Motor neuron (in vitro differentiated cells): ENCODE measurements at regions of chr18 and their contacts with region 1.

Region 1: DNA sequence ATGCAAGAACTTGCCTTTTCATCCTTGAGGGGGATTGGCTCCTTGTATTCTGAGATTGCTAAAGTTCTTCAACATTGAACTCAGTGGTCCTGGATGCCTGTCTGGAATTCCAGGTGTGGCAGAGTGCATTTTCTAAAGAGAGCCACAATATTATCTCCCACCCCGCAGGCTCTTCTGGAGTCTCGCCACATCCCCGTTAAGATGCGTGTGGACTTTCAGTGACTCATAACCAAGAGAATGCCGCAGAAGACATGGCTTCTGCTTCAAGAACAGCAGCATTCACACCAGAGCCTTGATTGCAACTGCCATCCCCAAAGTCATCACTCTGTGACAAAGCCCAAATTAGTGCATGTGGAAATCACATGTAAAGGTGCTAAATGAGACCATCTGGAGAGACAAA is 142.7 kb downstream of the CDH20 start:
- ATAC-seq: no peak
- H3K4me3 ChIP-seq: no peak overlapping the region
- H3K27ac ChIP-seq: no peak overlapping the region
- H3K4me1 ChIP-seq: peaks cover 22 to 38% of the 10 kb centered on the region in 2 donors

Region 2: GRCh38 chr18:59988098-59988706 is 1487.7 kb before region 1 on chr18:
- in situ Hi-C with region 1: loop called in 1 of 9 experiments (anchors 25 kb)
- ATAC-seq: peak in 1 of 8 experiments; percentile 54
- H3K4me3 ChIP-seq: no peak overlapping the region
- H3K27ac ChIP-seq: no peak overlapping the region
- H3K4me1 ChIP-seq: no peaks in the 10 kb centered on the region

Region 3: GRCh38 chr18:60668583-60668982 is 807.3 kb before region 1 on chr18:
- in situ Hi-C with region 1: loop called in 1 of 9 experiments (anchors 25 kb)
- ATAC-seq: peak in 1 of 8 experiments; percentile 31
- H3K4me3 ChIP-seq: no peak overlapping the region
- H3K27ac ChIP-seq: no peak overlapping the region
- H3K4me1 ChIP-seq: no peaks in the 10 kb centered on the region

Region 4: DNA sequence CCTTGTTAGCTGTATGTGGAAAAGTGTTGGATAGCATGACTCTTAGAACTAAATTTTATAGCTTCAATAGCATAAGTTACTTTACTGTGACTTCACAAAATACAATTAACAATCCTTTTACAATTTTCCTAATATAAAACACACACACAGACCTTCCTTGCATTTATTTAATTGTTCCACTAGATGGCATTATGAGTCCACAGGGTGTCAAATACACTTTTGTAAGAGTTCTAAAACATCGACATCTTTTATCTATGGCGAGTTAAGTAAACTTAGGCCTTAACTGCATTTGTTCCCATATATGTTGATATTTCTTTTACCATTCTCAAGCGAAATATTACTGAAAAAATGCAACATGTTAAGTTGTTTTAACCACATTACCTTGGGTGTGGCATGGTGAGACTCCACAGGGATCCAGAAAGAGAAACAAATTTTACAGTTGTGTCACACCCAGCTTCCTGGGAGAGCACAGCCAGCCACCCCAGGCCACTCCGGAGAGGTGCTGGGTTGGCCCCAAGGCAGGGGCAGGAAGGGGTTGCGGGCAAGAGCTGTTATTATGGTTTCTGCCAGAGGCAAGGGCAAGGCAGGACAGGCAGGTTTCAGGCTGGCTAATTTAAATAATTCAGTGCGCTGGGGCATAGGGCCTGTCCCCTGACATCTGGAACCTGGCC is 791.0 kb before region 1 on chr18:
- in situ Hi-C with region 1: loop called in 7 of 9 experiments (anchors 25 kb)
- ATAC-seq: peak in 3 of 8 experiments; percentile 93 to 96 (median 96)
- H3K4me3 ChIP-seq: no peak overlapping the region
- H3K27ac ChIP-seq: no peak overlapping the region
- H3K4me1 ChIP-seq: peaks cover 0 to 6% of the 10 kb centered on the region in 2 donors

Region 5: DNA sequence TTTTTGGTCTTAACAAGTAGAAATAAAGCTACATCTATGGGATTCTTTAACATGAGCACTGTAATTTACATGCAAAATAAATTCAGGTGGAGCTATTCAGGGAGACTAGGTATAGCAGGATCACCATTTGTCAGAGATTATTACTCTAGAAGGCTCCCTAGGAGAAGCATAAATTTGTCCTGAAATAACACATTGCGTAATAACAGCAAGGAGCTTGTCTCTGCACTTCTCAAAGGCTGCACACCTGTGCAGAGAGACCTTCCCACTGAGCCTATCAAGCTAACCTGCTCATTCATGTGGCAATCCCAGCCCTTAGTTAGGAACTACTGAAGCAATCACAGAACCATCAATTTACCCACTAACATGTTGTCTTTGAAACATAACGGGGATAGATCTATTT is 666.0 kb before region 1 on chr18:
- in situ Hi-C with region 1: loop called in 1 of 9 experiments (anchors 25 kb)
- ATAC-seq: no peak
- H3K4me3 ChIP-seq: no peak overlapping the region
- H3K27ac ChIP-seq: no peak overlapping the region
- H3K4me1 ChIP-seq: peaks cover under 1 to 19% of the 10 kb centered on the region in 2 donors

Region 6: GRCh38 chr18:61085761-61086160 is 390.2 kb before region 1 on chr18:
- in situ Hi-C with region 1: loop called in 2 of 9 experiments (anchors 25 kb)
- ATAC-seq: no peak
- H3K4me3 ChIP-seq: no peak overlapping the region
- H3K27ac ChIP-seq: no peak overlapping the region
- H3K4me1 ChIP-seq: peaks cover 5 to 12% of the 10 kb centered on the region in 2 donors

Region 7: GRCh38 chr18:61333746-61334490 is 142.0 kb before region 1 on chr18:
- in situ Hi-C with region 1: loop called in 1 of 9 experiments (anchors 25 kb)
- ATAC-seq: peak; percentile 18 to 80 (median 74)
- H3K4me3 ChIP-seq: peak overlapping the region; percentile 42 to 67 (median 50)
- H3K27ac ChIP-seq: no peak overlapping the region
- H3K4me1 ChIP-seq: peaks cover 5 to 15% of the 10 kb centered on the region in 2 donors